ENCODE measurements at regions of chr22 and their contacts with region 1.

Region 1: DNA sequence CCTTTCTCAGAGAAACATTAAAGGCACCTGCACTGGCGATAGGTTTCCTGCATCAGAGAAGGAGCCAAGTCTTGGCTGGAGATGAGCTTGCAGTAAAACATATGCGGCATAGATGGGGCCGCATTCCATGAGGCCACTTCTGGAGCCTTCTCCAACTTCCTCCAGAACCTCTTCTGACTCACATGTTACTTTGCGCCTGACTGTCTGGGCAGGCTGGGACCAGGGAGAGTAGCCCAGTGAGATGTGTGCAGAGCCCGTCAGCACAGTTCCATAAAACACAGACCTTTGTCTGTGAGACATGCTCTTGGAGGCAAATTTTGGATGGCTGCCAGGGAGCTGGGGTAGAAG is 55.4 kb upstream of the BID start:
- DNase-seq: no peak
- CTCF ChIP-seq: no peak

Region 2: DNA sequence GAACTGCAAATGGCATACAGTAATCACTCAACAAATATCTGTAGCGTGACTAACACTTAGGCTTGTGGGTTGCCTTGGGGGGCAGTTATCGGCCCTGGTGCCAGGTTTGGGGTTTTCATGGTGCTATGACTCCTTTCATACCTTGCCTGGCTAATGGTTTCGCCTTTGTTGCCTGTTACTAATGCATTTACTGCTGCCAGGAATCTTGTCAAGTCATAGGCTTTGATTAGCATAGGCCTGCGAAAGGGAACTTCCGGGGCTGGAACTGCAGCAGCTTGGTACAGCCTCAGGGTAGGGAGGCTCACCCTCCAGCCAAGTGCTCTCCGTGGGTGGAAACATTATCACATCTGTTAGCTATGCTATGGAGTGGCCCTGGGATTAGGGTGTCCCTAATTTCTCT is 253.2 kb before region 1 on chr22:
- in situ Hi-C with region 1: no loop called
- DNase-seq: no peak
- CTCF ChIP-seq: no peak

Region 3: GRCh38 chr22:17754233-17754925 is 75.3 kb before region 1 on chr22:
- in situ Hi-C with region 1: no loop called
- DNase-seq: no peak
- CTCF ChIP-seq: peak; percentile 52

Region 4: GRCh38 chr22:18077639-18078328 is 248.1 kb after region 1 on chr22 and contains the start of gene PEX26:
- in situ Hi-C with region 1: loop called (anchors 10 kb)
- DNase-seq: peak; percentile 96
- CTCF ChIP-seq: no peak